CD4-positive, alpha-beta memory T cell (primary cell): ENCODE measurements at regions of chr2 and their contacts with region 1.

Region 1: DNA sequence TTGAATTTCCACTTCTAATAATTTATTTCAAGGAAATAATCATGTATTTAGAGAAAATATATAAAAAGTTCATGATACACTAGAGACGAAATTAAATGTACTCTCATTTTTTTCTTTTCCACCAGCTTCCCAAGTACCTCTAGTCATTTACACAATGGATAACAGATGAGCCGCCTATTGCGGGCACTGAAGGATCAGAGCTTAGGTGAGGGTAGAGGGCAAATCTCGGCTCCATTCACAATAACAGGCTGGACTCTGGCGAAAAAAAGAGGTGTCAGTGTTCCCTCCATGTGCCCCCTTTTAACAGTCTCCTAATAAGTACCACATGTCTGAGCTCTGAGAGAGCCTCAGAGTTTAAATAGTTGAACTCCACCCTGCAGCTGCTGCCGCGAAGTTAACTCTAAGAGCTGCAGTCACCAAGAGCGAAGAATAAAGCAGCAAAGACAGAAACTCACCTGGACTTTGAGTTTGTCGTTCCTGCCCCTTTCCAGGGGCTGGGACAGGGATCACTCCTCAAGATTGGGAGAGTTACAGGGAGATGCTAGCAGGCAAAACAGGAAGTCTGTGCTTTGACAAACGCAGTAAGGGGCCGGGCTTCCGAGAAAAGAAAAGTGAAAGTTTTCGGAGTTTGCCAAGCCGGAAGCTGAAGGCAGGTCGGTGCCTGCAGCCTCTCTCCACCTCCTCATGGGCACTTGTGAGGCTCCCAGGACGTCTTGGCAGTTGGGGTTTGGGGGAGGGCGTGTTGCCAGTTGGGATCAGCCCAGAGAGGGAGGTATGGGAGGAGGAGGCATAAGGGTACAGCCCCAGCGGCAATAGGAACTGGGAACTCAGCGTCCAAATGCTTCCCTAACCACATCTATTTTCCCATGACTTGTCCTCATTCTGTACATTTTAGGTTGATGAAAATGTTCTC is at the start of gene SP110:
- DNase-seq: peak; percentile 78 to 86 (median 81)
- H3K4me3 ChIP-seq: peak within 1 kb of the TSS; percentile 87 to 89
- H3K4me3 Mint-ChIP-seq: peak within 1 kb of the TSS; percentile 95 to 100 (median 99)
- H3K27ac ChIP-seq: peak within 1 kb of the TSS; percentile 86
- H3K27ac Mint-ChIP-seq: peak within 1 kb of the TSS; percentile 93 to 99 (median 98)
- H3K4me1 ChIP-seq: peaks cover 56% of the 10 kb centered on the region
- H3K4me1 Mint-ChIP-seq: peaks cover 47 to 75% (median 57%) of the 10 kb centered on the region in 4 donors
- H3K27me3 ChIP-seq: no peaks in the 10 kb centered on the region
- H3K27me3 Mint-ChIP-seq: no peaks in the 10 kb centered on the region
- total RNA-seq, gene SP110: 108 to 123 TPM

Region 2: DNA sequence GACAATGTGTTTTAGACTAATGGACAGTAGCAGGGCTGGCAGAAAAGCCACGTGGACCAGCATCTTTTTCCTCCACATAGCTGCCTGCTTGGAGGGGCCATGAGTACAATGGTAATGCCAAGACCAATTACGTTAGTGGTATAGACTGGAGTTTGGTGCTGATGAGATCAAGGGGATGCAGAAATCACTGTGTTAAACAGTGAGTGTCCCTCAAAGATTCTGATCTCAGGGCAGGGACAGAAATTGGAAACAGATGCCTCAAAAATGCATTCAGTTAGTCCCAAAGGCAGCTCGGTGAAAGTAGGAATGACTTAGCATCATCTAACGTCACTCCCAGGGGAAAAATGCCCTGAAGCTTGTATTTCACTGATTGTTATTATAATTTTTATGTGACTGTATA is 223.4 kb before region 1 on chr2:
- CTCF ChIA-PET with region 1: no interaction called
- POLR2A ChIA-PET with region 1: no interaction called
- intact Hi-C with region 1: no loop called
- DNase-seq: no peak
- H3K4me3 ChIP-seq: no peak overlapping the region
- H3K4me3 Mint-ChIP-seq: no peak overlapping the region
- H3K27ac ChIP-seq: no peak overlapping the region
- H3K27ac Mint-ChIP-seq: no peak overlapping the region
- H3K4me1 ChIP-seq: no peaks in the 10 kb centered on the region
- H3K4me1 Mint-ChIP-seq: peaks cover 0 to 6% (median 2%) of the 10 kb centered on the region in 4 donors
- H3K27me3 ChIP-seq: no peaks in the 10 kb centered on the region
- H3K27me3 Mint-ChIP-seq: no peaks in the 10 kb centered on the region

Region 3: DNA sequence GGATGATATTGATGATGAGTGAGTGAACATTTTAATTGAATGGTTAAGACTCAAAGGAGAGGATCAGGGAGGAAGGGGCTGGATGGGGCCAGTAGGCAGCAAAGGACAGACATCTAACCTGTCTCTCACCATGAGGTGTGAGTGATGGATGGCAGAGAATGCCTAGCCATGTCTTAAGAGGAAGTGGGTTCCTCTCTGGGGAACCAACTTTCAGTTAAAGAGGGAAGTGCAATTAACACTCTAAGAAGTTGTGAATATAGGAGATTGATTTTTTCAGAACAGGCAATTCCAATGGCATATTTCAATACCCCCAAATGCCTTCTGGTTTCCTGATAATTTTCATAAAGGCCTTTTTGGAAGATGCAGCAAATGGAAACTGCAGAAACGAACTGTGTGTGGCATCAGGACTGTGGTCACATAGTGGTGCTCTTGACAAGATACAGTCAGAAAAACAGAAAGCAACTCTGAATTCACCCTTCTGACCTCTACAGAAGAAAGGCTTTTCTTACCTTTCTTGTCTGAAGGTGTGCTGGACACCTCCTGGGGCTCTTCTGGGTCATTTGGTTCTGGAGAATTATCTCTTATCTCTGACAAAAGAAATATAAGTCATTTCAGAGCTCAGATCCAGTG is 10.1 kb before region 1 on chr2:
- CTCF ChIA-PET with region 1: interaction called, 3 read pairs
- POLR2A ChIA-PET with region 1: interaction called, 23 read pairs
- intact Hi-C with region 1: no loop called
- DNase-seq: no peak
- H3K4me3 ChIP-seq: no peak overlapping the region
- H3K4me3 Mint-ChIP-seq: no peak overlapping the region
- H3K27ac ChIP-seq: peak overlapping the region; percentile 5
- H3K27ac Mint-ChIP-seq: no peak overlapping the region
- H3K4me1 ChIP-seq: peaks cover 13% of the 10 kb centered on the region
- H3K4me1 Mint-ChIP-seq: peaks cover 15 to 25% (median 19%) of the 10 kb centered on the region in 4 donors
- H3K27me3 ChIP-seq: no peaks in the 10 kb centered on the region
- H3K27me3 Mint-ChIP-seq: no peaks in the 10 kb centered on the region

Region 4: GRCh38 chr2:230254152-230254881 is 34.6 kb after region 1 on chr2:
- CTCF ChIA-PET with region 1: interaction called, 6 read pairs
- POLR2A ChIA-PET with region 1: interaction called, 29 read pairs
- intact Hi-C with region 1: loop called (anchors 5 kb)
- DNase-seq: peak; percentile 75 to 82 (median 78)
- H3K4me3 ChIP-seq: peak overlapping the region in 1 of 2 donors; percentile 11
- H3K4me3 Mint-ChIP-seq: no peak overlapping the region
- H3K27ac ChIP-seq: no peak overlapping the region
- H3K27ac Mint-ChIP-seq: no peak overlapping the region
- H3K4me1 ChIP-seq: peaks cover 39% of the 10 kb centered on the region
- H3K4me1 Mint-ChIP-seq: peaks cover 8 to 14% (median 12%) of the 10 kb centered on the region in 4 donors
- H3K27me3 ChIP-seq: no peaks in the 10 kb centered on the region
- H3K27me3 Mint-ChIP-seq: no peaks in the 10 kb centered on the region

Region 5: DNA sequence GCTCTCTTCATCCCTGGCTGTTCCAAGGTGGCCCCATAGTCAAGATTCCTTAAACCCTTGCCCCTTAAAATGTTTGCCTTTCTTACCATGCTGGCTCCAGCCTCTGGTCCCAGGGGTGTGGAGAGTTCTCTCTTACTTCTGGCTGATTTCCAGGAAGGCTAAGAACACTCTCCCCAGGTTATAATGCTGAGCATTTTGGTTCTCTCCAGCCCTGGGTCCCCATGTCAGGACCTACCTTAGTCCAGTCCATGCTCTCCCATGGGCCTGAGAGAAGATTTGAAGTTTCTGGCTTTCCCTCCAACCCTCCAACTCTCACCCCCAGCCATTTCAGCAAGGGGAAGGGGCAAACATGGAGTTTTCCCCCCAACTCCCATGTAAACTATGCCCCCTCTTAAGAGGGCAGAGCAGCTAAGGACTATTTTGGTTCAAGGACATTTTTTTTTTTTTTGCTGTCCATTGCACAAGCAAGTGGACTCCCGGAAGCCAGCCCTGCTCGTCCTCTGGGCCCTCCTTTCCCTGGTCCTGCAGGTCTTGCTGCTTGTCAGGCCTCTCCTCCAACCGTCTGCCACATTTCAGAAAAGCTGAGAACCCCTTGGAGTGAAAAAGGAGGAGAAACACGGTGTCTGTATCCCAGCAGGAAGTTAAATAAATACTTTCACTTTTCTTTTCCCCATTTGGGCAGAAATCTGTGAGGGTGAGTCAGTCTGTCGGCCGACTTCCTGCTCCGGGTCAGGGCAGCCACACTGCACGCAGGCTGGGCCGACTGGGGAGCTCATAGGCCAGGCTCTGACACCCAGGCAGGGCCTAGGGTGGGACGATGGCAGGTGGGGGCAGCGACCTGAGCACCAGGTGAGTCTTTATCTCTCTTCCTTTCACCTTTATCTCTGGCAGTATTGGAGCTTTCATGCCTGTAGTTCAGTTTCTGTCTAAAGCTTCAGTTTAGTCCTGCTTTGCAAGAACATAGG is 107.1 kb after region 1 on chr2 and contains the start of gene SP140L:
- CTCF ChIA-PET with region 1: no interaction called
- POLR2A ChIA-PET with region 1: interaction called, 31 read pairs
- intact Hi-C with region 1: no loop called
- DNase-seq: peak; percentile 73 to 89 (median 79)
- H3K4me3 ChIP-seq: peak within 1 kb of the TSS; percentile 51 to 82
- H3K4me3 Mint-ChIP-seq: peak within 1 kb of the TSS; percentile 90 to 98 (median 94)
- H3K27ac ChIP-seq: peak within 1 kb of the TSS; percentile 84
- H3K27ac Mint-ChIP-seq: peak within 1 kb of the TSS; percentile 94 to 99 (median 97)
- H3K4me1 ChIP-seq: peaks cover 78% of the 10 kb centered on the region
- H3K4me1 Mint-ChIP-seq: peaks cover 48 to 90% (median 75%) of the 10 kb centered on the region in 4 donors
- H3K27me3 ChIP-seq: no peaks in the 10 kb centered on the region
- H3K27me3 Mint-ChIP-seq: no peaks in the 10 kb centered on the region
- total RNA-seq, gene SP140L: 98.6 to 102 TPM

Region 6: GRCh38 chr2:230602562-230603230 is 383.0 kb after region 1 on chr2:
- CTCF ChIA-PET with region 1: no interaction called
- POLR2A ChIA-PET with region 1: interaction called, 10 read pairs
- intact Hi-C with region 1: loop called (anchors 2 kb)
- DNase-seq: peak; percentile 49 to 71 (median 62)
- H3K4me3 ChIP-seq: peak overlapping the region; percentile 41 to 44
- H3K4me3 Mint-ChIP-seq: peak overlapping the region; percentile 36 to 85 (median 78)
- H3K27ac ChIP-seq: peak overlapping the region; percentile 59
- H3K27ac Mint-ChIP-seq: peak overlapping the region; percentile 81 to 99 (median 97)
- H3K4me1 ChIP-seq: peaks cover 63% of the 10 kb centered on the region
- H3K4me1 Mint-ChIP-seq: peaks cover 48 to 81% (median 63%) of the 10 kb centered on the region in 4 donors
- H3K27me3 ChIP-seq: no peaks in the 10 kb centered on the region
- H3K27me3 Mint-ChIP-seq: no peaks in the 10 kb centered on the region

Region 7: GRCh38 chr2:230614913-230615332 is 395.2 kb after region 1 on chr2:
- CTCF ChIA-PET with region 1: no interaction called
- POLR2A ChIA-PET with region 1: no interaction called
- intact Hi-C with region 1: loop called (anchors 5 kb)
- DNase-seq: no peak
- H3K4me3 ChIP-seq: no peak overlapping the region
- H3K4me3 Mint-ChIP-seq: no peak overlapping the region
- H3K27ac ChIP-seq: no peak overlapping the region
- H3K27ac Mint-ChIP-seq: no peak overlapping the region
- H3K4me1 ChIP-seq: peaks cover 25% of the 10 kb centered on the region
- H3K4me1 Mint-ChIP-seq: peaks cover 9 to 19% (median 16%) of the 10 kb centered on the region in 4 donors
- H3K27me3 ChIP-seq: no peaks in the 10 kb centered on the region
- H3K27me3 Mint-ChIP-seq: no peaks in the 10 kb centered on the region

Region 8: GRCh38 chr2:231514103-231514950 is 1294.7 kb after region 1 on chr2:
- CTCF ChIA-PET with region 1: no interaction called
- POLR2A ChIA-PET with region 1: no interaction called
- intact Hi-C with region 1: no loop called
- DNase-seq: peak; percentile 98 to 99 (median 99)
- H3K4me3 ChIP-seq: peak overlapping the region; percentile 88 to 90
- H3K4me3 Mint-ChIP-seq: peak overlapping the region; percentile 88 to 91 (median 90)
- H3K27ac ChIP-seq: peak overlapping the region; percentile 87
- H3K27ac Mint-ChIP-seq: peak overlapping the region; percentile 94 to 99 (median 99)
- H3K4me1 ChIP-seq: peaks cover 14% of the 10 kb centered on the region
- H3K4me1 Mint-ChIP-seq: peaks cover 14 to 25% (median 21%) of the 10 kb centered on the region in 4 donors
- H3K27me3 ChIP-seq: no peaks in the 10 kb centered on the region
- H3K27me3 Mint-ChIP-seq: peaks cover 0 to 2% of the 10 kb centered on the region in 2 donors